Testis (tissue), 5 donors: ENCODE measurements at regions of chr16 and their contacts with region 1.

Region 1: DNA sequence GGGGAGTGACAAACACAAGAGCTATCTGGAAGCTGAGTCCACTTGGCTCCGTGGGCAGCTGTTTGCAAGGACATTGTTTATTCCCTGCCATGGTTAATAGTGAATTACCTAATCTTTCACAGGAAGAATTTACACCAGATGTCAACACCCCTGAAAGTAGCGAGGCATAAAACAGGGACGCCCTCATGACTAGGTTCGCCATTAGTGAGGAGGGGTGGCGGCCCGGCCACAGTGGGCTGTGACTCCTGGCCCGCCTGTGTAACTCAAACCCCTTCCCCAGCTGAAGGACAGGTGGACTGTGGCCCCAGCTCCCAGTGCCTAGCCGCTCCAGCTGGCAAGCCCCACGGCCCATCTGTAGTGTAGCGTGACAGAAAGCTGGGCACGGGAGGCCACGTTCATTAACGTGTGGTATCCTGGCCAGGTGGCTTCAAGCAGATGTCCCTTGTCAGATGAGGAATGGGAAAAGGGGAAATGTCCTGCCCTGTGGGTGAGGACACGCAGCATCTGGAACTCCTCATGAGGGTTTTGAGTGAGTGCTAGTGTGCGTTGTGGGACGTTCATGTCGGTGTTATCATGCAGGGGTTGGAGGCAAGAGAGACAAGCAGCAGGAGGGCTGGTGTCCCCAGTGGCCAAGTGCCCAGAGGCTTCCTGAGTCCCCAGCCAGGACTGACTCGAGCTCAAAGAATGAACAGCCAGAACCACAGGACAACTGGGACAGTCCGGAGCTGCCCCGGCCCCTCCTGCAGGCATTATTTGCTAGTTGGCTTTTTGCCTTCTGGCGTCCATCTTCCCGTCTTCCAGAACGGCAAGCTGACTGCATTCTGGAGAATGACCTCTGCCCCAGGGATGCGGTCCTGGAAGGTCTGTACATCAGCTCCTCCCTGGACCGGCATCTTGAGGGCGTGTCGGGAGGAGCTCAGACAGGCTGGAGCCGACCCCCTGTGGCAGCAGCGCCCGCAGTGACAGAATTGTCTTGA is 19.2 kb downstream of the KDM8 start:
- DNase-seq: no peak
- H3K4me3 ChIP-seq: no peak overlapping the region
- H3K27ac ChIP-seq: no peak overlapping the region
- H3K4me1 ChIP-seq: no peaks in the 10 kb centered on the region
- H3K27me3 ChIP-seq: no peaks in the 10 kb centered on the region
- CTCF ChIP-seq: no peak
- POLR2A ChIP-seq: no peak

Region 2: DNA sequence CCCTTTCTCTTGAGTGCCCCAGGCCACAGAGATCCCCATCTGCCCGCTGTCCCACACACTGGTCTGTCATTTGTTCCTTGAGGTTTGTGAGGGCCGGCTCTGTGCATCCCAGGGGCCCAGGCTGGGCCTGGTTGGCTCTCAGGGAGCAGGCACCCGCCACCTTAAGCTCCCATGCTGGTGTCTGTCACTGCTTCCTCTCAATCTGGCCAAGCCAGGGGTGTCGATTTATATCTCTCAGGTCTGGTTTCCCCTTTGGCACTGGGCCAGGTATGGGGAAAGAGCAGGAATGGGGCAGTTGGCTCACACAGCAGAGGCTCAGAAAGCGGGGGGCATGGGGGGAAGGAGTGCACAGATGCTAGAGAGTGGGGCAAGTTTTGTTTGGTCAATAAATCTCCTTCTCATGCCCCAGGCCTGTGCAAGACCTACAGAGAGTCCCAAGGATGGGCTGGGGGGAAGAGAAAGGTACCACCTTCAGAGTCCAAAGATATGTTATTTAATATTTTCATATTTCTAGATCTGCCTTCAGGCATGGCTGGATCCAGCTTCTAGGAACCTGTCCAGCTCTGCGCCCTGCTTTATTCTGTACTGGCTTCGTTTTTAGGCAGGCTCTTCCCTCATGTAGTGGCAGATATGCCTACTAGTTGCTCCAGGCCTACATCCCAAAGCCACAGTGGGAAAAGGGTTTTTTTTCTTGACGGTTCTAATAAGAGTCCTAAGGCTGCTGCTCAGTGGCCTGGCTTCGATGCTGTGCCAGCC is 125.6 kb after region 1 on chr16:
- intact Hi-C with region 1: loop called (anchors 10 kb)
- DNase-seq: no peak
- H3K4me3 ChIP-seq: no peak overlapping the region
- H3K27ac ChIP-seq: no peak overlapping the region
- H3K4me1 ChIP-seq: no peaks in the 10 kb centered on the region
- H3K27me3 ChIP-seq: no peaks in the 10 kb centered on the region
- CTCF ChIP-seq: no peak
- POLR2A ChIP-seq: no peak

Region 3: GRCh38 chr16:27549859-27550581 is 327.5 kb after region 1 on chr16 and contains the starts of genes GTF3C1 and KATNIP:
- intact Hi-C with region 1: no loop called
- DNase-seq: peak; percentile 100
- H3K4me3 ChIP-seq: peak within 1 kb of the TSS; percentile 77 to 80
- H3K27ac ChIP-seq: peak within 1 kb of the TSS; percentile 52 to 71
- H3K4me1 ChIP-seq: peaks cover 24% of the 10 kb centered on the region
- H3K27me3 ChIP-seq: no peaks in the 10 kb centered on the region
- CTCF ChIP-seq: no peak
- POLR2A ChIP-seq: peak; percentile 1
- total RNA-seq, gene GTF3C1: 129 to 154 TPM
- total RNA-seq, gene KATNIP: 48.6 to 80.2 TPM